ENCODE measurements at regions of chr12 and their contacts with region 1.

Region 1: GRCh38 chr12:132908145-132909044 is 21.0 kb upstream of the CHFR start:
- DNase-seq: peak; percentile 99
- H3K4me3 Mint-ChIP-seq: peak overlapping the region; percentile 86
- H3K27ac Mint-ChIP-seq: peak overlapping the region; percentile 62
- H3K4me1 Mint-ChIP-seq: peaks cover 9% of the 10 kb centered on the region
- H3K27me3 Mint-ChIP-seq: no peaks in the 10 kb centered on the region

Region 2: GRCh38 chr12:132710422-132711168 is 197.8 kb before region 1 on chr12 and contains the start of gene PGAM5:
- CTCF ChIA-PET with region 1: no interaction called
- intact Hi-C with region 1: loop called (anchors 1 kb)
- DNase-seq: peak; percentile 86
- H3K4me3 Mint-ChIP-seq: peak within 1 kb of the TSS; percentile 85
- H3K27ac Mint-ChIP-seq: peak within 1 kb of the TSS; percentile 66
- H3K4me1 Mint-ChIP-seq: peaks cover 27% of the 10 kb centered on the region
- H3K27me3 Mint-ChIP-seq: no peaks in the 10 kb centered on the region
- total RNA-seq, gene PGAM5: 50.1 to 55.7 TPM

Region 3: DNA sequence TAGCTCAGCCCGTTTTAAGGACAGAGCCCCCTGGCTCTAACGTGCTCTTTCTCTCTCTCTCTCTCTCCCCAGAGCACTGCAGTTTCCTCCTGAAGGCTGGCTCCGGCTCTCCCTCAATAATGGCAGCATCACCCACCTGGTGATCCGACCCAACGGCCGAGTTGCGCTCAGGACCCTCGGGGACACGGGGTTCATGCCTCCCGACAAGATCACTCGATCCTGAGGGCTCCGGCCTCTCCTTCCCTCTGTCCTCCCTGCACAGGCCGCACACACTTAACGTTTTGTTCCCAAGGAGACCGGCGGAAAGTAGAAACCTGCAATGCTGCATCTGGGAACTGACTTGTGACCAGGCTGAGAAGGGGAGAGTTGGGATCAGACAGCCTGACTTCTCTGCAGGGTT is 187.8 kb before region 1 on chr12:
- CTCF ChIA-PET with region 1: no interaction called
- intact Hi-C with region 1: no loop called
- DNase-seq: no peak
- H3K4me3 Mint-ChIP-seq: no peak overlapping the region
- H3K27ac Mint-ChIP-seq: no peak overlapping the region
- H3K4me1 Mint-ChIP-seq: no peaks in the 10 kb centered on the region
- H3K27me3 Mint-ChIP-seq: no peaks in the 10 kb centered on the region

Region 4: GRCh38 chr12:132771126-132771838 is 137.1 kb before region 1 on chr12:
- CTCF ChIA-PET with region 1: interaction called, 10 read pairs
- intact Hi-C with region 1: loop called (anchors 1 kb)
- DNase-seq: peak; percentile 75
- H3K4me3 Mint-ChIP-seq: peak overlapping the region; percentile 30
- H3K27ac Mint-ChIP-seq: peak overlapping the region; percentile 80
- H3K4me1 Mint-ChIP-seq: peaks cover 57% of the 10 kb centered on the region
- H3K27me3 Mint-ChIP-seq: no peaks in the 10 kb centered on the region

Region 5: DNA sequence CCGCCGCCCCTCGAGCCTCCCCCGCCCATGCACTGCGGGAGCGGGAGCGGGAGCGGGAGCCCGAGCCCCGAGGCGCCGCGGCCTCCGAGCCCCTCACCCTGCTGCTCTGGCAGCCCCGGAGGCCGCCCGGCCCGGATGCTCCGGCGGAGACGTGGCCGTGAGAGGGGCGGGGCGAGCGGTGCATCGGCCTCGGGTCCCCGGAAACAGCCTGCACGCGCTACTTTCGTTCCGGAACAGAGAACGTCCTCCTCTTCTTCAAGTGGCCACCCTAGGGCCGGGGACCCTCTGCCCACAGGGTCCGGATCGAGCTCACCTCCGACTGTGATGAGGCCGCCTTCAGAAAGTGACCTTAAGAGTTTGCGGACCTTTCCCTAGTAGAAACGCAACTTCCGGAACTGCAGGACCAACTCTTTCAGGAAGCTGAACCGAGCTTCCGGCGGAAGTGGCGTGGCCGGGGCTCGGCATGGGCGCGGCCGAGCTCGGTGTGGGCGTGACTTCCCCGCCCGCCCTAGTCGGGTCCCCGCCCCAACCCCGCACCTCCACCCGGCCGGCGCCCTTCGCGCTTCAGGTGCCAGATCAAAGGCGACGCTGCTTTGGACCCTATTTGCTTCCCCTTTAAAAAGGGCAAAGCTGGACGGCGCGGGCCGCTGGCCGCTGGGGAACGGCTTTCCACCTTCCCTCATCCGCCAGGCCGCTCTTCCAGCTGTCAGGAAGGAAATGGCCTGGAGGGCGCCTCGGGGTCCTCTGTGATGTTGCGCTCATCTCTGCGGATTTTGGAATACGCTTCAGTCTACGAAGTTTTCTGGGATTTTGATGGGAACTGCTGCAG is 79.5 kb before region 1 on chr12 and contains the start of gene GOLGA3:
- CTCF ChIA-PET with region 1: interaction called, 4 read pairs
- intact Hi-C with region 1: loop called (anchors 2 kb)
- DNase-seq: peak; percentile 95
- H3K4me3 Mint-ChIP-seq: peak within 1 kb of the TSS; percentile 98
- H3K27ac Mint-ChIP-seq: peak within 1 kb of the TSS; percentile 100
- H3K4me1 Mint-ChIP-seq: peaks cover 49% of the 10 kb centered on the region
- H3K27me3 Mint-ChIP-seq: no peaks in the 10 kb centered on the region
- total RNA-seq, gene GOLGA3: 25.2 to 29.1 TPM

Region 6: DNA sequence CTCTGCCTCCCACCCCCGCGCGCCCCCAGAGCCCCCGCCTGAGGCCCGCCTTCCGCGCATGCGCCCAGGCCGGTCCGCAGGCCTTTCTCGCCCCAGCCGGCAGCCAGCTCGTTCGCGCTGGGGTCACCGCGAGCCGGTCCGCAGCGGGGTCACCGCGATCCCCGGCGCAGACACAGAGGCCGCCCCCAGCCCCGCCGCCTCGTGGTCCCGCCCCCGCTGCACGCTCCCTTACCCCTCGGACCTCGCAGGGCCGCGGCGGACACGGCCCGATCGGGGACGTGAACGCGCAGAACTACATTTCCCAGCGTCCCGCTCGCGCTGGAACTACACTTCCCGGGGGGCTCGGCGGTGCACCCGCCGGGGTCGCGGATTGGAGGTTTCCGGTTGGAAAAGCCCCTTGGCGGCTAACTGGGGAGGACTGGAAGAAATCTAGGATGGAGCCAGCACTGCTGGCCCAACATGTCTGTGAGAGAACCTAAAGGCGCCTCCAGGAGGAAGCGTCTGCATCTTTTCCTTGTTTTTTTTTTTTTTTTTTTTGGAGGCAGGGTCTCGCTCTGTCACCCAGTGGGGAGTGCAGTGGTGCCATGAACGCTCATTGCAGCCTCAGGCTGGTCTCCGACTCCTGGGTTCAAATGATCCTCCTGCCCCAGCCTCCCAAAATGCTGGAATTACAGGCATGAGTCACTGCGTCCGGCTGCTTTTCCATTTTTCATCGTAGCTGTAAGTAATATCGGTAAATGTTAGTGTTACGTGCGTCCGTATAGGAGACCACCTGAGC is 47.8 kb after region 1 on chr12 and contains the start of gene ZNF605:
- CTCF ChIA-PET with region 1: no interaction called
- intact Hi-C with region 1: loop called (anchors 1 kb)
- DNase-seq: peak; percentile 92
- H3K4me3 Mint-ChIP-seq: peak within 1 kb of the TSS; percentile 89
- H3K27ac Mint-ChIP-seq: peak within 1 kb of the TSS; percentile 87
- H3K4me1 Mint-ChIP-seq: peaks cover 20% of the 10 kb centered on the region
- H3K27me3 Mint-ChIP-seq: no peaks in the 10 kb centered on the region
- total RNA-seq, gene ZNF605: 4.3 to 5.3 TPM

Region 7: GRCh38 chr12:133037207-133038005 is 129.0 kb after region 1 on chr12 and contains the start of gene ZNF84:
- CTCF ChIA-PET with region 1: interaction called, 3 read pairs
- intact Hi-C with region 1: loop called (anchors 1 kb)
- DNase-seq: peak; percentile 97
- H3K4me3 Mint-ChIP-seq: peak within 1 kb of the TSS; percentile 97
- H3K27ac Mint-ChIP-seq: peak within 1 kb of the TSS; percentile 97
- H3K4me1 Mint-ChIP-seq: peaks cover 10% of the 10 kb centered on the region
- H3K27me3 Mint-ChIP-seq: no peaks in the 10 kb centered on the region
- total RNA-seq, gene ZNF84: 11.0 to 12.9 TPM

Region 8: GRCh38 chr12:133130038-133130807 is 221.8 kb after region 1 on chr12 and contains the starts of genes ZNF10 and ZNF891:
- CTCF ChIA-PET with region 1: no interaction called
- intact Hi-C with region 1: loop called (anchors 1 kb)
- DNase-seq: peak; percentile 97
- H3K4me3 Mint-ChIP-seq: peak within 1 kb of the TSS; percentile 97
- H3K27ac Mint-ChIP-seq: peak within 1 kb of the TSS; percentile 97
- H3K4me1 Mint-ChIP-seq: peaks cover 14% of the 10 kb centered on the region
- H3K27me3 Mint-ChIP-seq: no peaks in the 10 kb centered on the region
- total RNA-seq, gene ZNF10: 4.9 to 6.0 TPM
- total RNA-seq, gene ZNF891: 1.1 to 1.2 TPM

Measured in activated naive CD4-positive, alpha-beta T cell treated with anti-CD3 and anti-CD28 coated beads for 36 hours (primary cell).